Naive thymus-derived CD4-positive, alpha-beta T cell (primary cell): ENCODE measurements at regions of chr4 and their contacts with region 1.

Region 1: GRCh38 chr4:184474263-184475095 is at the start of gene IRF2:
- DNase-seq: peak; percentile 80 to 98 (median 95)
- ATAC-seq: peak; percentile 93
- H3K4me3 ChIP-seq: peak within 1 kb of the TSS; percentile 89
- H3K4me3 Mint-ChIP-seq: peak within 1 kb of the TSS; percentile 97 to 100 (median 99)
- H3K27ac ChIP-seq: peak within 1 kb of the TSS; percentile 96
- H3K27ac Mint-ChIP-seq: peak within 1 kb of the TSS; percentile 95 to 100 (median 99)
- H3K4me1 ChIP-seq: peaks cover 27 to 34% of the 10 kb centered on the region in 2 donors
- H3K4me1 Mint-ChIP-seq: peaks cover 39 to 72% (median 66%) of the 10 kb centered on the region in 7 donors
- H3K27me3 ChIP-seq: no peaks in the 10 kb centered on the region
- H3K27me3 Mint-ChIP-seq: peaks cover 0 to 4% (median 0%) of the 10 kb centered on the region in 5 donors
- total RNA-seq, gene IRF2: 31.2 to 86.3 (median 75.0) TPM

Region 2: GRCh38 chr4:183444214-183445066 is 1030.0 kb before region 1 on chr4 and contains the start of gene CDKN2AIP:
- CTCF ChIA-PET with region 1: no interaction called
- POLR2A ChIA-PET with region 1: no interaction called
- intact Hi-C with region 1: loop called in 1 of 2 experiments (anchors 2 kb)
- DNase-seq: peak; percentile 92 to 97 (median 95)
- ATAC-seq: peak; percentile 93
- H3K4me3 ChIP-seq: peak within 1 kb of the TSS; percentile 81
- H3K4me3 Mint-ChIP-seq: peak within 1 kb of the TSS; percentile 94 to 99 (median 97)
- H3K27ac ChIP-seq: peak within 1 kb of the TSS; percentile 96
- H3K27ac Mint-ChIP-seq: peak within 1 kb of the TSS; percentile 97 to 98 (median 98)
- H3K4me1 ChIP-seq: peaks cover 30 to 33% of the 10 kb centered on the region in 2 donors
- H3K4me1 Mint-ChIP-seq: peaks cover 35 to 66% (median 51%) of the 10 kb centered on the region in 7 donors
- H3K27me3 ChIP-seq: no peaks in the 10 kb centered on the region
- H3K27me3 Mint-ChIP-seq: peaks cover 0 to 5% (median 0%) of the 10 kb centered on the region in 5 donors
- total RNA-seq, gene CDKN2AIP: 24.9 to 58.2 (median 44.4) TPM

Region 3: DNA sequence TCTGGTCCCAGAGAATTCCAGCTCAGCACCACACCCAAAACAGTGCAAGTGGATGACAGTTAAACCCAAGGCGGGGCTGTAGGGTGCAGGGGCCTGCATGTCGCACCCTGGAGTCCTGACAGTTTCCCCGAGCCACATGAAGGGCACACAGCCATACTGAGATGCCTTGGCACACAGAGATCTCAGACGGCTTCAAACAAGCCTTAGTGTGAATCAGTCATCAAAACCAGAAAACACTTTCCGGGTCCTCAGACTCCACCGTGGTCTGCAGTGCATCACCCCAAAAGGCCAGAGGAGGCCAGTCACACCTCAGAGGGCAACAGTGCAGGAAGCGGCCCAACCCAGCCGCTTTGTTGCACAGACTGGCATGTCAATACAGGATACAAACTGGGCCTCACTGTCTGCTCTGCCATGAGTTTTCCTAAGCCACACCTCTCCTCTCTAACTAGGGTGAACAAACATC is 192.2 kb before region 1 on chr4:
- CTCF ChIA-PET with region 1: no interaction called
- POLR2A ChIA-PET with region 1: no interaction called
- intact Hi-C with region 1: loop called (anchors 1 to 5 kb)
- DNase-seq: peak in 5 of 9 donors; percentile 8 to 56 (median 25)
- ATAC-seq: peak; percentile 75
- H3K4me3 ChIP-seq: no peak overlapping the region
- H3K4me3 Mint-ChIP-seq: peak overlapping the region in 2 of 10 donors; percentile 1 to 25
- H3K27ac ChIP-seq: no peak overlapping the region
- H3K27ac Mint-ChIP-seq: peak overlapping the region in 8 of 9 donors; percentile 17 to 90 (median 64)
- H3K4me1 ChIP-seq: peaks cover 24 to 35% of the 10 kb centered on the region in 2 donors
- H3K4me1 Mint-ChIP-seq: peaks cover 22 to 50% (median 38%) of the 10 kb centered on the region in 7 donors
- H3K27me3 ChIP-seq: no peaks in the 10 kb centered on the region
- H3K27me3 Mint-ChIP-seq: no peaks in the 10 kb centered on the region

Region 4: DNA sequence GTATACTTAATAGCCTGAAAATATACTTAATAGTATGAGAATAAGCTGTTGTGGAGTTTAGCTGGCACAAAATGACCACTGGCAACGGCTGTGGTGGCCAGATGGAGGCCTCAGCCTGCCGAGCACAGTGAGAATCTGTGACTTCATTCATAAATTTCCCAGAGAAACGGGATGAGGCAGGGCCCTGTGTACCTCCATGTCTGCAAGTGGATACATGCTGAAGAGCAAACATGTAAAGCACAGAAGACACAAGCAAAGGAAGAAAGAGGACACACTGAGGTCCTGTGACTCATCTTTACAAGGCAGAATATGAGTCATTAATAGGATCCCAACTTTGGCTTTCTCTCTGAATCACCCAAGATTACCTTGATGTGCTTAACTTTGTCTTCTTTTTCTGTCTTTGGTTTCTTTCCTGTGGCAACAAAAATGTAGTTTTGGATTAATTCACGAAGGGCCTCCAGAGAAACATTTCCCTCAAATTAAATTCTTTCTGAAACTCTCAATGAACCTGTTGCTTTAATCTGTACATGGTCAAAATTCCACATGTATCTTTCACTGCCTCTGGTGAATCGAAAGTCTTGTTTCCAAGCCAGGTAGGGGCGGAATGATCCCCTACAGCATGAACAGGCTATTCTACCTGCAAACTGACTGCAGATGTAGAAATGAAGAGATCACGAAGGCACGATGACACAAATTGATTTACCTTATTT is 56.5 kb before region 1 on chr4:
- CTCF ChIA-PET with region 1: no interaction called
- POLR2A ChIA-PET with region 1: interaction called, 6 read pairs
- intact Hi-C with region 1: loop called (anchors 1 kb)
- DNase-seq: peak in 2 of 9 donors; percentile 26 to 31
- ATAC-seq: peak; percentile 69
- H3K4me3 ChIP-seq: peak overlapping the region; percentile 64
- H3K4me3 Mint-ChIP-seq: peak overlapping the region; percentile 23 to 94 (median 82)
- H3K27ac ChIP-seq: peak overlapping the region; percentile 74
- H3K27ac Mint-ChIP-seq: peak overlapping the region; percentile 82 to 97 (median 95)
- H3K4me1 ChIP-seq: peaks cover 35 to 52% of the 10 kb centered on the region in 2 donors
- H3K4me1 Mint-ChIP-seq: peaks cover 43 to 80% (median 77%) of the 10 kb centered on the region in 7 donors
- H3K27me3 ChIP-seq: no peaks in the 10 kb centered on the region
- H3K27me3 Mint-ChIP-seq: no peaks in the 10 kb centered on the region

Region 5: GRCh38 chr4:184506527-184507121 is 32.1 kb after region 1 on chr4:
- CTCF ChIA-PET with region 1: no interaction called
- POLR2A ChIA-PET with region 1: interaction called, 10 read pairs
- intact Hi-C with region 1: loop called (anchors 1 kb)
- DNase-seq: peak in 7 of 9 donors; percentile 7 to 41 (median 23)
- ATAC-seq: peak; percentile 77
- H3K4me3 ChIP-seq: no peak overlapping the region
- H3K4me3 Mint-ChIP-seq: peak overlapping the region in 6 of 10 donors; percentile 4 to 65 (median 42)
- H3K27ac ChIP-seq: no peak overlapping the region
- H3K27ac Mint-ChIP-seq: peak overlapping the region in 7 of 9 donors; percentile 20 to 89 (median 39)
- H3K4me1 ChIP-seq: peaks cover 13 to 20% of the 10 kb centered on the region in 2 donors
- H3K4me1 Mint-ChIP-seq: peaks cover 14 to 38% (median 35%) of the 10 kb centered on the region in 7 donors
- H3K27me3 ChIP-seq: no peaks in the 10 kb centered on the region
- H3K27me3 Mint-ChIP-seq: no peaks in the 10 kb centered on the region

Region 6: DNA sequence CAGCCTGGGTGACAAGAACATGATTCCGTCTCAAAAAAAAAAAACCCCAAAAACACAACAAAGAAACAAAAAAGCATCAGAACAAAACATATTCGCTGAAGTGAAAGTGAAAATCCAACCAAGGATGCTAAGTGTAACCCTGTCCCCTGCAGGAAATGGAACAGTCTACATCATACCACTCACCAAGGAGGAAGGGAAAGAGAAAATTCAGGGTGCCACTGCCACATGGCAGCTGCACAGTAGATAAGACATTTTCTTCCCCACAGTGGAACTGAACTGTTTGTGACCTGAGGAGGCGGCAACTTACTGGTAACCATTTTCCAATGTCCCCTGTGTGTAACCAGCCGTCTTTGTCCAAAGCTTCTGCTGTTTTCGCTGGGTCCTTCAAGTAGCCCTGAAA is 287.6 kb after region 1 on chr4:
- CTCF ChIA-PET with region 1: no interaction called
- POLR2A ChIA-PET with region 1: interaction called, 4 read pairs
- intact Hi-C with region 1: loop called (anchors 1 kb)
- DNase-seq: peak in 8 of 9 donors; percentile 38 to 84 (median 75)
- ATAC-seq: peak; percentile 96
- H3K4me3 ChIP-seq: no peak overlapping the region
- H3K4me3 Mint-ChIP-seq: peak overlapping the region; percentile 6 to 78 (median 66)
- H3K27ac ChIP-seq: peak overlapping the region; percentile 36
- H3K27ac Mint-ChIP-seq: peak overlapping the region; percentile 83 to 94 (median 87)
- H3K4me1 ChIP-seq: peaks cover 5 to 14% of the 10 kb centered on the region in 2 donors
- H3K4me1 Mint-ChIP-seq: peaks cover 0 to 23% (median 20%) of the 10 kb centered on the region in 7 donors
- H3K27me3 ChIP-seq: no peaks in the 10 kb centered on the region
- H3K27me3 Mint-ChIP-seq: no peaks in the 10 kb centered on the region

Region 7: DNA sequence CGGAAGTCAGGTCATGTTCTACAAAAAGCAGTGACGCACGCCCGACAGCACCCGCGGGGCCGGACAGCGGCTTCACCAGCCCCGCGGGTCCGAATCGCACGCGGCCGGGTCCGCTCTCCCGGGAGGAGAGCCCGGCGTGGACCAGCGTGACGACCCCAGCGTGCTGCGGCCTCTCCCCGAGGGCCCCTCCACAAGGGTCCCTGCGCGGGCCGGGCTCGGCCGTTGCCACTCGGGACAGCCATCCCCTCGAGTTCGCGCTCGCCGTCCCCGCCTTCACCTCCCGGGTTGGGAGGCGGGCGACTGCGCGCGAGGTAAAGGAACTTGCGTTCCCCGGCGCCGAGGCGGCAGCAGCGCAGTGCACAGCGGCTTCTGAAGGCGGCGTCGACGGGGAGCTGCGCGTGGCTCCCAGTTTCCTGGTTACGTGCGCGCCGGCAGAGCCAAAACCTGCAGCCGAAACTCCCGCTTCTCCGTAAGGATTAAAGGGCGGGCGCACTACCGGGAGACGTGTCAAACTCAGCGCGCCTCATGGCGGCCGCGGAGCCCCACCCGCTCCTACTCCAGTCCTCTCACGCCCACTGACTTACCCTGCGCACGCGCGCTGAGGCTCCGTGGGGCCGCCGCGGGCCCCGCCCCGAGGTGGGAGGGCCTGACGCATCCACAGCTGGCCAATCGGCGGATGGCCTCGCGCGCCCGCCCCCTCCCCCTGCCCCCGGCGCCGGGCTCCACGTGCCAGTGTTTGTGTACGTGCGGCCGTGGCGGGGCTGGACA is 921.7 kb after region 1 on chr4:
- CTCF ChIA-PET with region 1: no interaction called
- POLR2A ChIA-PET with region 1: no interaction called
- intact Hi-C with region 1: loop called (anchors 10 kb)
- DNase-seq: peak; percentile 93 to 100 (median 97)
- ATAC-seq: peak; percentile 97
- H3K4me3 ChIP-seq: peak overlapping the region; percentile 69
- H3K4me3 Mint-ChIP-seq: peak overlapping the region; percentile 82 to 100 (median 97)
- H3K27ac ChIP-seq: peak overlapping the region; percentile 97
- H3K27ac Mint-ChIP-seq: peak overlapping the region; percentile 90 to 100 (median 99)
- H3K4me1 ChIP-seq: peaks cover 12 to 15% of the 10 kb centered on the region in 2 donors
- H3K4me1 Mint-ChIP-seq: peaks cover 14 to 57% (median 27%) of the 10 kb centered on the region in 7 donors
- H3K27me3 ChIP-seq: no peaks in the 10 kb centered on the region
- H3K27me3 Mint-ChIP-seq: no peaks in the 10 kb centered on the region